GM10248 (cell line): ENCODE measurements at regions of chr1 and their contacts with region 1.

Region 1: GRCh38 chr1:119948342-119949214 is 52.3 kb upstream of the ADAM30 start:
- DNase-seq: peak; percentile 58
- CTCF ChIP-seq: peak; percentile 95

Region 2: DNA sequence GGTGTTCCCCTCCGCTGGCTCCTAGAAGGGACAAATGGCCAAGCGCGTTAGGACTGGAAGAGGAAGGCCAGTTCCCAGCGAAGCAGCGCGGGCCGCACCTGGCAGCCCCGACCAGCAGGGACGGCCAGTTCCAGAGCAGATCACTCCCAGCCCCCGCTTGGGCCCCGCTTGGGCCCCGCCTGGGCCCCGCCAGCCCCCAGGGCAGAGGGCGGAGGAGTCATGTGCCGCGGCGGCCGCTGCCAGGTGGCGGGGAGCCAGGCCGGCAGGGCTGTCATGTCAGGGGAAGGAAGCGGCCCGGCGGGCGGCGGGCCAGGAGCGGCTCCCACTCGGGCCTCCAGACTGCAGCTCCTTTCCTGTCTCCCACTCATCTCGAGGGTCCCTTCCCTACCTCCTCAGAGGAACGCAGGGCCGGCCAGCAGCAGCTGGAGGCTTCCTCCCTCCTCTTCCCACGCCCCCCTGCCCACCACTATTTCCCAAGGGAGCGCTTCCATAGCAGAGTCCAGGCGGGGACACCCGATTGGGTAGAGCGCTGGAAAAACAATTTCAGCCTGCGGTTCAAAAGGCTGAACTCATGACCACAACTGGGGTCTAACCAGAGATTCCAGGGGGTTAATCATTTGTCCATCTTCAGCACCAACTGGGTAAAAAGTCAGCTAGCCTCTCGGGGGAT is 317.0 kb before region 1 on chr1:
- CTCF ChIA-PET with region 1: no interaction called
- POLR2A ChIA-PET with region 1: no interaction called
- DNase-seq: peak; percentile 29
- CTCF ChIP-seq: no peak

Region 3: GRCh38 chr1:119920104-119920968 is 28.2 kb before region 1 on chr1:
- CTCF ChIA-PET with region 1: interaction called, 11 read pairs
- POLR2A ChIA-PET with region 1: no interaction called
- DNase-seq: no peak
- CTCF ChIP-seq: no peak

Region 4: DNA sequence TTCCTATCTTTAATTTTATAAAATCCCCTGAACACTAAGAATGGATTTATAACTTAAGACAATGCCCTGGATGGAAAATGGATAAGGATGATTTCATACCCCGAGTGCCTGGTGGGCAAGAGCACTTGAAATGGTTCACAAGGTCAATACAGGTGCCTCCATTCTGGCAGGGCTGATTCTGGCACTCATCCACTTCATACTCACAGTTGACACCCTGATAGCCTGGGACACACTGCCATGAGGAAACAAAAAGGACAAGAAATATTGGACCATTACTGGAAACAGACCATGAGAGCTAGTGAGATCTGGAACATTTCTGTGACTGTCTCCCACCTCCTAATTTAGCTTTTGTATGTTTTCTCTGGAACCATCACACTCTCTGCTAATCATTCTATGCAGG is 13.2 kb before region 1 on chr1:
- CTCF ChIA-PET with region 1: interaction called, 21 read pairs
- POLR2A ChIA-PET with region 1: no interaction called
- DNase-seq: no peak
- CTCF ChIP-seq: no peak

Region 5: GRCh38 chr1:119968068-119968492 is 19.5 kb after region 1 on chr1:
- CTCF ChIA-PET with region 1: interaction called, 100 read pairs
- POLR2A ChIA-PET with region 1: no interaction called
- DNase-seq: peak; percentile 37
- CTCF ChIP-seq: peak; percentile 82

Region 6: GRCh38 chr1:119974013-119974412 is 25.4 kb after region 1 on chr1:
- CTCF ChIA-PET with region 1: interaction called, 100 read pairs
- POLR2A ChIA-PET with region 1: no interaction called
- DNase-seq: no peak
- CTCF ChIP-seq: no peak

Region 7: DNA sequence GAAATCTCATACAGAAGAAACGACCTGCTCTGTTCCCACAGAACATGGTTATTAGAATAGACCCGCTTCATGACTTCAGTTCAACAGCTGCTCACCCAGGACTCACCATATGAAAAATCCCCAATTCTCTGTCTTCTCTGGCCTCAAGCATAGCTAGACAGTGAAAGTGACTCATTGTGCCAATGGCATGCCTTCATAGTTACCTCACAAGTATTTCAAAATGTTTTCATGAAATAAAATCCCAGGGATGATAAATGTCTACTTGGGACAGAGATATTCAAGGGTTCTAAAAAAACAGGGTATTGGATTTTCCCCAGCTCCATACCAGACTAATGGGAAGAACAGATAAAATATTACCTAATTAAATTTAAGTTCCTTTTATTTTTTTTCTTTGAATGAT is 38.5 kb after region 1 on chr1:
- CTCF ChIA-PET with region 1: no interaction called
- POLR2A ChIA-PET with region 1: no interaction called
- DNase-seq: no peak
- CTCF ChIP-seq: no peak